ENCODE measurements at regions of chr14 and their contacts with region 1.

Region 1: GRCh38 chr14:65958664-65959562 is 527.3 kb upstream of the CCDC196 start:
- DNase-seq: no peak
- ATAC-seq: peak; percentile 55
- H3K4me3 Mint-ChIP-seq: no peak overlapping the region
- H3K27ac Mint-ChIP-seq: no peak overlapping the region
- H3K4me1 Mint-ChIP-seq: peaks cover 22% of the 10 kb centered on the region
- H3K27me3 Mint-ChIP-seq: no peaks in the 10 kb centered on the region
- CTCF ChIP-seq: peak; percentile 81

Region 2: DNA sequence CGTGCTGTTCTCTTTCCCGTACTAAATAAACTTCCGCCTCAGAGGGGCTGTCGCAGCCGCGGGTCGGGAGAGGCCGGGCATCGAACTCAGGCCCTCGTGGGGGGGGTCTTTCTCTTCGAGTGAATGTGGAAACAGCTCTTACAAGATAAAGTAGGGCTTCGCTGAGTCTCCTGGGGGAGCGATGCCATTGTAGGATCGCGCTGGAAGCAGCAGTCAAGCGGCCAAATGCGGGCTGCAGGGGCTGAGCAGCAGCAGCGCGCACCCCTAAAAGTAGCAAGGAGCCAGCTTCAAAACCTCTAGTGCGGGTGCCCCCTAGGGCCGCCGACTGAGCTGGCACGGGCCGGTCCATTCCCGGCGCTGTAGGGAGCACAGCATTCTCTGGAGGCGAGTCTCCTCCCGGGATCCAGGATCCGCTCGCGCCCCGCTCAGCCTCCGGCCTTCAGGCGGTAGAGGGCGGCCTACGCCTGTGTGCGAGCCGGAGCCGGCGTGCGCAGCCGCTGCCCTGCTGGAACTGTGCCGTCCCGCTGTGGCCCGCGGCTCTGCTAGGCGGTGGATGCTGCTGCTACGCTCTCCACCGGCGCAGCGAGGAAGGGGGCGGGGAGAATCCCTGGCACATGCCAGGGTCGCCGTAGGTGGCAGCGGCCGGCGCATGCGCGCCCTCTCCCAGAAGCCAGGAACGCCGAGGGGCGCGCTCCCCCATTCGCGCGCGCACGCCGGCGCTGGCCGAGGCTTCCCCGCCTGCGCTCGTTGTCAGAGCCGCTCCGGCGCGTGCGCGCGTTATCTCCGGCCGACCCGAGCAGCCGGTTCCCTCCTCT is 546.7 kb before region 1 on chr14 and contains the start of gene FUT8:
- CTCF ChIA-PET with region 1: interaction called, 31 read pairs
- POLR2A ChIA-PET with region 1: no interaction called
- intact Hi-C with region 1: no loop called
- DNase-seq: peak; percentile 97
- ATAC-seq: peak; percentile 91
- H3K4me3 Mint-ChIP-seq: peak within 1 kb of the TSS; percentile 95
- H3K27ac Mint-ChIP-seq: peak within 1 kb of the TSS; percentile 98
- H3K4me1 Mint-ChIP-seq: peaks cover 46% of the 10 kb centered on the region
- H3K27me3 Mint-ChIP-seq: no peaks in the 10 kb centered on the region
- CTCF ChIP-seq: peak; percentile 66
- total RNA-seq, gene FUT8: 55.7 to 61.0 TPM

Region 3: GRCh38 chr14:65718629-65719028 is 240.3 kb before region 1 on chr14:
- CTCF ChIA-PET with region 1: no interaction called
- POLR2A ChIA-PET with region 1: no interaction called
- intact Hi-C with region 1: no loop called
- DNase-seq: no peak
- ATAC-seq: no peak
- H3K4me3 Mint-ChIP-seq: no peak overlapping the region
- H3K27ac Mint-ChIP-seq: no peak overlapping the region
- H3K4me1 Mint-ChIP-seq: peaks cover 28% of the 10 kb centered on the region
- H3K27me3 Mint-ChIP-seq: no peaks in the 10 kb centered on the region
- CTCF ChIP-seq: no peak

Region 4: GRCh38 chr14:65824285-65824977 is 134.5 kb before region 1 on chr14:
- CTCF ChIA-PET with region 1: interaction called, 98 read pairs
- POLR2A ChIA-PET with region 1: interaction called, 3 read pairs
- intact Hi-C with region 1: no loop called
- DNase-seq: peak; percentile 68
- ATAC-seq: peak; percentile 98
- H3K4me3 Mint-ChIP-seq: no peak overlapping the region
- H3K27ac Mint-ChIP-seq: no peak overlapping the region
- H3K4me1 Mint-ChIP-seq: peaks cover 7% of the 10 kb centered on the region
- H3K27me3 Mint-ChIP-seq: no peaks in the 10 kb centered on the region
- CTCF ChIP-seq: peak; percentile 88

Region 5: GRCh38 chr14:65847075-65847847 is 111.7 kb before region 1 on chr14:
- CTCF ChIA-PET with region 1: interaction called, 44 read pairs
- POLR2A ChIA-PET with region 1: no interaction called
- intact Hi-C with region 1: loop called (anchors 5 kb)
- DNase-seq: peak; percentile 86
- ATAC-seq: peak; percentile 80
- H3K4me3 Mint-ChIP-seq: peak overlapping the region; percentile 38
- H3K27ac Mint-ChIP-seq: peak overlapping the region; percentile 82
- H3K4me1 Mint-ChIP-seq: peaks cover 67% of the 10 kb centered on the region
- H3K27me3 Mint-ChIP-seq: no peaks in the 10 kb centered on the region
- CTCF ChIP-seq: no peak

Region 6: GRCh38 chr14:65879248-65880009 is 79.5 kb before region 1 on chr14:
- CTCF ChIA-PET with region 1: interaction called, 48 read pairs
- POLR2A ChIA-PET with region 1: no interaction called
- intact Hi-C with region 1: no loop called
- DNase-seq: peak; percentile 19
- ATAC-seq: peak; percentile 89
- H3K4me3 Mint-ChIP-seq: no peak overlapping the region
- H3K27ac Mint-ChIP-seq: peak overlapping the region; percentile 65
- H3K4me1 Mint-ChIP-seq: peaks cover 18% of the 10 kb centered on the region
- H3K27me3 Mint-ChIP-seq: no peaks in the 10 kb centered on the region
- CTCF ChIP-seq: no peak

Region 7: DNA sequence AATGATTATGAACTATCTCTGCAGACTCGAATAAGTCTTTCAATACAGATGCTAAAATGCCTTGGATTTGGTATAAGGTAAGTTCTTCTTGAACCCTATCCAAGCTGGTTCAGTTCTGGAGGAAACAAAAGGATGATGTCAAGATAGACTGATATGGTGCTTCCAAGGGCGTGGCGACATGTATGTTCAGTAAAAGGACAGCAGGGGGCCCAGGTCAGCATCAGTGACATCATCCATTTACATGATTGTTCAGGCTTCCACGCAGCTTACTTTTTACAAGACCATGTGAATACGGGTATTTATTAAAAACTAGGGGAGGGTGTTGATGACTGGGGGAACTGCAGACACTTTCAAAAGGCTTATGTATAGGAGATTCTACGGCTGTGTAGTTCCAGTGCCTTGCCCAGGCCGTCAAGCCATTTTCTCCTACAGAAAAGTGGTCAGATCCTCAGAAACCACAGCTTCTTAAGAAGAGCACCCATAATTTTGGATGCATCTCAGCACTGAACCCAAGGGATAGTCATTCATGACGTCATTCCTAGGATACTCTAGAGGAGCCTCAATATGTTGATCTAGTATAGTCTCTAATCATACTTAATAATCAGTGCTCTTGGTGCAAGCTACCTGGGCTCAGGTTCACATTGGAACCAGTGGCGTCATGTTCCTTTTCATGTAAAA is 18.7 kb before region 1 on chr14:
- CTCF ChIA-PET with region 1: interaction called, 19 read pairs
- POLR2A ChIA-PET with region 1: no interaction called
- intact Hi-C with region 1: no loop called
- DNase-seq: peak; percentile 65
- ATAC-seq: peak; percentile 54
- H3K4me3 Mint-ChIP-seq: no peak overlapping the region
- H3K27ac Mint-ChIP-seq: no peak overlapping the region
- H3K4me1 Mint-ChIP-seq: peaks cover 52% of the 10 kb centered on the region
- H3K27me3 Mint-ChIP-seq: no peaks in the 10 kb centered on the region
- CTCF ChIP-seq: peak; percentile 33

Region 8: DNA sequence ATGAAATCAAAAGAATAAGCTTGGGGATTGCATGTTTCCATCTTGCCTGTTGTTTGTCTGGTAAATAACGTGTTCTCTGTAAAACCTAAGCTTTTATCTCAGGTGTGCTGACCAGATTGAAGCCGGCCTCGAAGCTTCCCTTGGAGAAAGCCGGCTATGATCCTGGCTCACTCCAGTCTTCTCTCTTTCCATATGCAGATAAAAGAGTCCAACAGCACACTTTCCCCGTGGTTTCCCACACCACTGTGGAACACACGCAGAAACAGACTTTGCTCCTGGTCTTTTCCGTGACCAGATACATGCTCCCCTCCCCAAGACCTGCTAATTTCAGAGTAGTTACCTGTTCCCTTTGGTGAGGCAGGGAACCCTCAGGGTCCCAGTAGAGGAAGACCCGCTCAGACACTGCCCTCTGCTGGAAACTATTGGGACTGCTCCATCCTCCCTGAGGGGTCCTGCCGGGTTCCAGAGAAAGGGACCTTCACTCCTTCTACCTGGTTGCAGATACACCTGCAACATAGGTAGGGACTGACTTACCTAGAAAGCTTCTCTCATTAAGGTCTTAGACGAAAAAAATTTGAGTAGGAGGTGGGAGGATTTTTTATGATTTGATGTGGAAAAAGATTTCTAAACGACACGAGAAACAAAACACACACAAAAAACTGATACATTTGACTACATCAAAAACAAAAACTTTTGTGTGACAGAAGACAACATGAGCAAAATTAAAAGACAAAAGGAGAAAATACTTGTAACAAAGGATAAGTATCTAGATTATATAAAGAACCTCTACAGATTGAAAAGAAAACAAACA is 111.8 kb after region 1 on chr14:
- CTCF ChIA-PET with region 1: interaction called, 46 read pairs
- POLR2A ChIA-PET with region 1: no interaction called
- intact Hi-C with region 1: loop called (anchors 10 kb)
- DNase-seq: peak; percentile 79
- ATAC-seq: peak; percentile 90
- H3K4me3 Mint-ChIP-seq: no peak overlapping the region
- H3K27ac Mint-ChIP-seq: no peak overlapping the region
- H3K4me1 Mint-ChIP-seq: no peaks in the 10 kb centered on the region
- H3K27me3 Mint-ChIP-seq: no peaks in the 10 kb centered on the region
- CTCF ChIP-seq: peak; percentile 90